ENCODE measurements at regions of chr2 and their contacts with region 1.

Region 1: DNA sequence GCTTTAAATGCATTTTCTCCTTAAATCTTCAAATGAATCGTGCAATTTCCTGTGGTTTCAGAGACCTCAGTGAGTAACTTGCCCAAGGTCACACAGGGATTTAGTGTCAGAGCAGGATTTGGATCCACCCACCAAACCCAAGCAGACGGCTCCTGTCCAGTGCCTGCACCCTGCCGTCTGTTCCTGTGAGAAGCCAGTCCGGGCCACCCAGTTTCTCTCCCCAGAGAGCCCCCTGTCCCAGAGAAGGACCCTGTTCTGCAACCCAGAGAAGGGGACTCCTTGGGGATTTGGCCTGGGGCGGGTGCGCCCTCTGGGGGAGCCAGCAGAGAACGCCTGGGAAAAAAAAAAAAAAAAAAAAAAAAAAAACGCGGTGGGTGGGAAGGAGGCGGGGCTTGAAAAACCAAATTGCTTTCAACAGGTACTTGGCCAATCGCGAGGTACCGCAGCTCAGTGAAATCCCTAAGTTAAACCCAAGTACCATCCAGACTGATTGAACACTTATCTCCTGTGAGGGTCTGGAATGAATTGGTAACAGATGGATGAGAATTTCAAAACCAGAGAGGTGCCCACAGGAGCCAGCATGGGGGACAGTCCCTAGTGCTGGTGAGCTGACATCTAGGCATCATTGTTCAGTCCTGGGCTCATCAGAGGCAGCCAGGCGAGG is 30.9 kb upstream of the REEP1 start:
- DNase-seq: peak in 28 of 35 experiments; percentile 2 to 63 (median 18)
- ATAC-seq: peak; percentile 48 to 78 (median 50)
- H3K4me3 ChIP-seq: peak overlapping the region; percentile 17 to 26
- H3K4me3 Mint-ChIP-seq: peak overlapping the region; percentile 43 to 72 (median 47)
- H3K27ac ChIP-seq: no peak overlapping the region
- H3K27ac Mint-ChIP-seq: peak overlapping the region; percentile 70 to 75
- H3K4me1 ChIP-seq: peaks cover 26 to 42% of the 10 kb centered on the region in 2 experiments
- H3K4me1 Mint-ChIP-seq: peaks cover 52 to 66% (median 55%) of the 10 kb centered on the region in 3 donors
- H3K27me3 ChIP-seq: no peaks in the 10 kb centered on the region
- H3K27me3 Mint-ChIP-seq: no peaks in the 10 kb centered on the region

Region 2: GRCh38 chr2:86097114-86097896 is 271.0 kb before region 1 on chr2:
- CTCF ChIA-PET with region 1: no interaction called
- POLR2A ChIA-PET with region 1: no interaction called
- DNase-seq: no peak
- ATAC-seq: no peak
- H3K4me3 ChIP-seq: no peak overlapping the region
- H3K4me3 Mint-ChIP-seq: no peak overlapping the region
- H3K27ac ChIP-seq: no peak overlapping the region
- H3K27ac Mint-ChIP-seq: peak overlapping the region in 1 of 2 donors; percentile 42
- H3K4me1 ChIP-seq: no peaks in the 10 kb centered on the region
- H3K4me1 Mint-ChIP-seq: peaks cover 18 to 26% (median 20%) of the 10 kb centered on the region in 3 donors
- H3K27me3 ChIP-seq: no peaks in the 10 kb centered on the region
- H3K27me3 Mint-ChIP-seq: no peaks in the 10 kb centered on the region

Region 3: DNA sequence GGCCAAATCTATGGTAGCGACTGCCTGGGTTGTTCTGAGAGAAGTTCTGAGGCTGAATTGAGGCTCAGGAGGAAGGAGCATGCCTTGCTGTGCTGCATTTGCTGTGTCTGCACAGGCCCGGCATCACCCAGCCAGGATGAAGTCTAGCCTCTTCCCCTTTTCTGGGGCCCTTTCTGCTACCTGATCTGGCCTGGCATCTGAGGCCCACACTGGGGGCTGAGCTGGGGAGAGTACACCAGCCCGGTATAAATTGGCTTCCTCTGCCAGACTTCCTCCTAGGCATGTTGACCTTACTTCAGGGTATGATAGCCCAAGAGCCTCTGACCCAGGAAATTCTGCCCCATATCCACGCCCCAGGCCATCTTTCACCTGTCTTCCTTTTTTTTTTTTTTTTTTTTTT is 139.1 kb before region 1 on chr2:
- CTCF ChIA-PET with region 1: interaction called in 1 of 2 experiments, 11 read pairs
- POLR2A ChIA-PET with region 1: no interaction called
- DNase-seq: no peak
- ATAC-seq: no peak
- H3K4me3 ChIP-seq: no peak overlapping the region
- H3K4me3 Mint-ChIP-seq: no peak overlapping the region
- H3K27ac ChIP-seq: no peak overlapping the region
- H3K27ac Mint-ChIP-seq: no peak overlapping the region
- H3K4me1 ChIP-seq: peaks cover 2 to 12% of the 10 kb centered on the region in 2 experiments
- H3K4me1 Mint-ChIP-seq: peaks cover 10 to 16% (median 16%) of the 10 kb centered on the region in 3 donors
- H3K27me3 ChIP-seq: peaks cover 0 to 30% of the 10 kb centered on the region in 2 experiments
- H3K27me3 Mint-ChIP-seq: no peaks in the 10 kb centered on the region

Region 4: GRCh38 chr2:86243950-86244733 is 124.2 kb before region 1 on chr2:
- CTCF ChIA-PET with region 1: no interaction called
- POLR2A ChIA-PET with region 1: interaction called in 1 of 2 experiments, 10 read pairs
- DNase-seq: no peak
- ATAC-seq: no peak
- H3K4me3 ChIP-seq: no peak overlapping the region
- H3K4me3 Mint-ChIP-seq: no peak overlapping the region
- H3K27ac ChIP-seq: no peak overlapping the region
- H3K27ac Mint-ChIP-seq: no peak overlapping the region
- H3K4me1 ChIP-seq: peaks cover 0 to 5% of the 10 kb centered on the region in 2 experiments
- H3K4me1 Mint-ChIP-seq: peaks cover 0 to 5% (median 5%) of the 10 kb centered on the region in 3 donors
- H3K27me3 ChIP-seq: no peaks in the 10 kb centered on the region
- H3K27me3 Mint-ChIP-seq: no peaks in the 10 kb centered on the region

Region 5: GRCh38 chr2:86274918-86275275 is 93.4 kb before region 1 on chr2:
- CTCF ChIA-PET with region 1: no interaction called
- POLR2A ChIA-PET with region 1: no interaction called
- DNase-seq: no peak
- ATAC-seq: no peak
- H3K4me3 ChIP-seq: no peak overlapping the region
- H3K4me3 Mint-ChIP-seq: no peak overlapping the region
- H3K27ac ChIP-seq: no peak overlapping the region
- H3K27ac Mint-ChIP-seq: no peak overlapping the region
- H3K4me1 ChIP-seq: no peaks in the 10 kb centered on the region
- H3K4me1 Mint-ChIP-seq: no peaks in the 10 kb centered on the region
- H3K27me3 ChIP-seq: peaks cover 0 to 8% of the 10 kb centered on the region in 2 experiments
- H3K27me3 Mint-ChIP-seq: peaks cover 2 to 18% of the 10 kb centered on the region in 2 donors

Measured in T-cell (primary cell).